ENCODE measurements at regions of chr2 and their contacts with region 1.

Region 1: GRCh38 chr2:222860740-222861410 is at the start of gene ACSL3:
- DNase-seq: peak; percentile 88 to 91 (median 91)
- H3K4me3 ChIP-seq: peak within 1 kb of the TSS; percentile 57 to 63
- H3K4me3 Mint-ChIP-seq: peak within 1 kb of the TSS; percentile 73 to 86 (median 82)
- H3K27ac ChIP-seq: peak within 1 kb of the TSS; percentile 67
- H3K27ac Mint-ChIP-seq: peak within 1 kb of the TSS; percentile 59 to 97 (median 94)
- H3K4me1 ChIP-seq: peaks cover 42% of the 10 kb centered on the region
- H3K4me1 Mint-ChIP-seq: peaks cover 4 to 11% (median 6%) of the 10 kb centered on the region in 4 donors
- H3K27me3 ChIP-seq: no peaks in the 10 kb centered on the region
- H3K27me3 Mint-ChIP-seq: no peaks in the 10 kb centered on the region
- total RNA-seq, gene ACSL3: 24.8 to 30.9 TPM

Region 2: DNA sequence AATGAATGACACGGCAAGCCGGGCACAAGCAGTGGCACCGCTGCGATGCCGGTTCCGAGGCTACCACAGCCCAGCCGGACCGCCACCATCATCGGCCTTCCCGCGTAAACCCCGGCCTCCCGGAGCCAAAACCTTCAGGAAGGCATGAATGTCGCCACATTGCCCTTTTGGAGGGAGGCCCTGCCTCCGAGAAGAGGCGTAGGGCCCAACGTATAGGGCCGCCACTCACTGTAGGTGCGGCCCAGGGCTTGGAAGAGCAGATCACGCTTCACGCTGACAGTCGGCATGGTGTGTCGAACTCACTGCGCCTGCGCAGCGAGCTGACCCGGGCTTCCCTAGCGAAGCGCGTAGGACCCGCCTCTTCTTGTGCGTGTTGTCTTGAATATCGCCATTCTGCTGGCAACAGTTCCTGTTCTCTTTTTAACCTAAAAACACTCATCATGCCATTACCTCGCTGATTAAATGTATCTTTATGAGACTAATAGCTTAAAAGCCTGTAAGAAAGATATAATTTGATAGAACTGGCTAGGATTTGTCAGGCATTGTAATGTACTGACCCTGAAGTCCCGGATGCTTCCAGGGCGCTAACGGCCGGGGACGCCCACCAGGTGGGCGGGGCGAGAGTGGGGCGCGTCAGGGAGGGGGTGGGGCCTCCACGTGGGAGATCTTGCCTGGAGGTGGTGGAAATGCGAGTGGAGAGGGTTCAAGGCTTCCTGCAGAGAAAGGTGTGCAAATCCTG is 204.9 kb before region 1 on chr2 and contains the start of gene FARSB:
- CTCF ChIA-PET with region 1: no interaction called
- POLR2A ChIA-PET with region 1: interaction called, 3 read pairs
- intact Hi-C with region 1: loop called (anchors 1 kb)
- DNase-seq: peak; percentile 94 to 97 (median 96)
- H3K4me3 ChIP-seq: peak within 1 kb of the TSS; percentile 84 to 99
- H3K4me3 Mint-ChIP-seq: peak within 1 kb of the TSS; percentile 94 to 99 (median 96)
- H3K27ac ChIP-seq: peak within 1 kb of the TSS; percentile 91
- H3K27ac Mint-ChIP-seq: peak within 1 kb of the TSS; percentile 99 to 100 (median 100)
- H3K4me1 ChIP-seq: peaks cover 41% of the 10 kb centered on the region
- H3K4me1 Mint-ChIP-seq: peaks cover 24 to 57% (median 40%) of the 10 kb centered on the region in 4 donors
- H3K27me3 ChIP-seq: no peaks in the 10 kb centered on the region
- H3K27me3 Mint-ChIP-seq: no peaks in the 10 kb centered on the region
- total RNA-seq, gene FARSB: 11.2 to 11.8 TPM

Region 3: GRCh38 chr2:222819722-222820333 is 41.0 kb before region 1 on chr2:
- CTCF ChIA-PET with region 1: no interaction called
- POLR2A ChIA-PET with region 1: no interaction called
- intact Hi-C with region 1: no loop called
- DNase-seq: no peak
- H3K4me3 ChIP-seq: no peak overlapping the region
- H3K4me3 Mint-ChIP-seq: no peak overlapping the region
- H3K27ac ChIP-seq: no peak overlapping the region
- H3K27ac Mint-ChIP-seq: no peak overlapping the region
- H3K4me1 ChIP-seq: no peaks in the 10 kb centered on the region
- H3K4me1 Mint-ChIP-seq: no peaks in the 10 kb centered on the region
- H3K27me3 ChIP-seq: no peaks in the 10 kb centered on the region
- H3K27me3 Mint-ChIP-seq: no peaks in the 10 kb centered on the region